CD14-positive monocyte (primary cell): ENCODE measurements at regions of chr7 and their contacts with region 1.

Region 1: GRCh38 chr7:84218681-84219080 is 24.1 kb upstream of the SEMA3A start:
- DNase-seq: peak; percentile 17 to 34 (median 24)
- H3K4me3 ChIP-seq: no peak overlapping the region
- H3K4me3 Mint-ChIP-seq: no peak overlapping the region
- H3K27ac ChIP-seq: no peak overlapping the region
- H3K27ac Mint-ChIP-seq: peak overlapping the region in 3 of 7 donors; percentile 35 to 75 (median 75)
- H3K4me1 ChIP-seq: peaks cover 7 to 11% of the 10 kb centered on the region in 2 donors
- H3K4me1 Mint-ChIP-seq: peaks cover 18% of the 10 kb centered on the region
- H3K27me3 ChIP-seq: no peaks in the 10 kb centered on the region
- H3K27me3 Mint-ChIP-seq: peaks cover 0 to 2% (median 0%) of the 10 kb centered on the region in 3 donors
- CTCF ChIP-seq: no peak

Region 2: DNA sequence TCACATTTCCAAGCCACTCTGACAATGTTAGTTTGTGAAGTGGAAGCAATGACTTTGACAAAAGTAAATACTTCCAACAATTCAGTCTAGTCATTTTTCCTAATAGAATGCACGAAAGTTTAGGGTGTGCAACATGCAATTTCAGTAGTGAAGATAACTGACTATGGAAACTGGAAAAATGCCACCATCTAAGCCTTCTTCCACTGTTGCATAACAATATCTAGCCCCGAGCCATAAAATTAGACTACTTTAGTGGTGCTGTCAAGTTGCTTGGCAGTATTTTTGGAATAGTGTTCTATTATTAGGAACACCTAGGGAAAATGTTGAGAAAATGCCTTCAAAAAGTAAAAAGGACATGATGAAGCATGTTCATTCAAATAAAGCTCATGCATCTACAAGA is 42.0 kb before region 1 on chr7:
- intact Hi-C with region 1: no loop called
- DNase-seq: no peak
- H3K4me3 ChIP-seq: no peak overlapping the region
- H3K4me3 Mint-ChIP-seq: no peak overlapping the region
- H3K27ac ChIP-seq: no peak overlapping the region
- H3K27ac Mint-ChIP-seq: no peak overlapping the region
- H3K4me1 ChIP-seq: no peaks in the 10 kb centered on the region
- H3K4me1 Mint-ChIP-seq: no peaks in the 10 kb centered on the region
- H3K27me3 ChIP-seq: no peaks in the 10 kb centered on the region
- H3K27me3 Mint-ChIP-seq: peaks cover 0 to 2% (median 0%) of the 10 kb centered on the region in 3 donors
- CTCF ChIP-seq: no peak

Region 3: GRCh38 chr7:84264396-84264795 is 45.7 kb after region 1 on chr7:
- intact Hi-C with region 1: loop called in 1 of 2 experiments (anchors 10 kb)
- DNase-seq: no peak
- H3K4me3 ChIP-seq: no peak overlapping the region
- H3K4me3 Mint-ChIP-seq: no peak overlapping the region
- H3K27ac ChIP-seq: no peak overlapping the region
- H3K27ac Mint-ChIP-seq: no peak overlapping the region
- H3K4me1 ChIP-seq: no peaks in the 10 kb centered on the region
- H3K4me1 Mint-ChIP-seq: no peaks in the 10 kb centered on the region
- H3K27me3 ChIP-seq: no peaks in the 10 kb centered on the region
- H3K27me3 Mint-ChIP-seq: peaks cover 0 to 2% (median 1%) of the 10 kb centered on the region in 3 donors
- CTCF ChIP-seq: no peak